Right ventricle myocardium superior (tissue), 1 donor: ENCODE measurements at regions of chrX and their contacts with region 1.

Region 1: DNA sequence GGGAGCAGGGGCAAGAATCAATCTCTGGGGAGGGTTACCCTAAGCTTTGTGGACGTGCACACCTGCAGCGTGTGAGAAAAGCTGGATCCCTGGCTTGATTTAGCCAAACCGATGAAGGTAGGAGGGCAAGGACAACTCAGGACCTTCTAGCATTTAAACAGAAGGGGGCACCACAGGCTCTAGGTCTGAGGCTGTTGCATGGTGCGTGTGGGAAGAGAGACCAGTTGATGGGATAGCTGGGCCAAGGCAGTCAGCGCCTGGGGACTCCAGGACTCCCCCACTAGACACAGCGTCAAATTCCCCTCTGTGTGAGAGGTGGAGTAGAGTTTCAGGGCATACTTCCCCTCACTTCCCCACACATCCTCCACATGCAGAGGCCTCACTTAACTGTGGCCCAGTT is 4.3 kb downstream of the GABRQ start:
- DNase-seq: no peak
- ATAC-seq: no peak

Region 2: DNA sequence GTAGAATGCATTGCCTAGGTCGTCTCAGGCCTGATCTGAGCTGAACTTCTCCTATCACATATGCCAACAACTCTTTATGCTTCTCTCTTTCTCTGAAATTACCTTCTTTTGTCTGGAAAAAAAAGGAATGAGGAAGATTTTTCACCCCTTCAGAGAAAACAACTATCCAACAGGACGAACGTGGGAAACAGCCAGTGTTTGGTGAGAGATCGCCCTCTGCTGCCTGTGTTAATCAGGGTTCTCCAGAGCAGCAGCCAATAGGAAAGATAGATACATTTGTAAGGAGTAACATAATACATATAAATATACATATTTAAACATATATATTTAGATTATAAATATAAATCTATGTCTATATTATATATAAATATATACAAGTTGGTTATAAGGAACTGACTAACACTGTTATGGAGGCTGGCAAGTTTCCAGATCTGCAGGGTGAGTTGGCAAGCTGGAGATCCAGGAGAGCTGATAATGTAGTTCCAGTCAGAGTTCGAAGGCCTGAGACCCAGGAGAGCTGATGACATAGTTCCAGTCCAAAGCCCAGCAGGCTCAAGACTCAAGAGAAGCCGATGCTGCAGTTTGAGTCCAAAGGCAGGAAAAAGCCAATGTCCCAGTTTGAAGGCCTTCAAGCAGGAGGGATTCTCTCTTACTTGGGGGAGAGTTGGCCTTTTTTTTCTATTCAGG is 175.2 kb after region 1 on chrX:
- intact Hi-C with region 1: loop called (anchors 5 kb)
- DNase-seq: no peak
- ATAC-seq: peak; percentile 56